ENCODE measurements at regions of chr19 and their contacts with region 1.

Region 1: DNA sequence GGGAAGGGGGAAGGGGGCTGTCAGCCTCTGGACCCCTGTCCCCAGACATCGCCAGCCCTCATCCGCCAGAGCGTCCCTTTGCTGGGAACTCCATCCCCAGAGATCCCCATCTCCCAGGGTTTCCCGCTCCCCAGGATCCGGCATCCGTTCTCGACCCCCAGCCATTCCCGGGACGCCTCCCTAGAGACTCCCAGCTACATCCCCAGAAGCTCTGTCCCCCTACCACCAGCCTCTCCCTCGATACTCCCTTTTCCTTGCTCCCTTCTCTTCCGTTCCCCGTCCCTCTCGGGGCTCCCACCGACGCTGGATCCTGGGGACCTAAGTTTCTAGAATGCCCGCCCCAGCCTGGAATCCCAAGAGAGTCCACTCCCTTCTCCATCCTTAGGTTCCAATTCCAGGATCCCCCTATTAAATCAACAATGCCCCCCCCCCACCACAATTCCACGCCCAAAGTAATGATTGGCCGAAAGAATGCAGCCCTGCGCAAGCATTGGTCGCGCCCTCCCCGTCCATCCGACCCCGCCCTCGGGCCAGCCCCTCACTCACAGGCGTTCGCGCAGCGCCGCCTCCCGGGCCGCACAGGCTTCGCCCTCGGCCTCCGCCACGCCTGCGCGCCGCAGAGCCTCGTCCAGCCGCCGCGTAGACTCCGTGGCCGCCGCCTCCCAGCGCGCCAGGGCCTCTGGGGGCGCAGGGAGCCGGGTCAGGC is 3.2 kb downstream of the CCDC194 start:
- DNase-seq: peak; percentile 95
- H3K4me3 ChIP-seq: peak overlapping the region; percentile 21 to 53 (median 41)
- H3K27ac ChIP-seq: no peak overlapping the region
- H3K4me1 ChIP-seq: peaks cover 17% of the 10 kb centered on the region
- H3K27me3 ChIP-seq: peaks cover 6% of the 10 kb centered on the region in 2 experiments
- CTCF ChIP-seq: peak; percentile 78 to 79
- POLR2A ChIP-seq: peak; percentile 31

Region 2: GRCh38 chr19:17292286-17293097 is 98.3 kb before region 1 on chr19:
- CTCF ChIA-PET with region 1: interaction called, 22 read pairs
- POLR2A ChIA-PET with region 1: no interaction called
- dilution Hi-C with region 1: no loop called
- intact Hi-C with region 1: loop called (anchors 1 kb)
- DNase-seq: peak; percentile 85
- H3K4me3 ChIP-seq: peak overlapping the region; percentile 36 to 51 (median 40)
- H3K27ac ChIP-seq: no peak overlapping the region
- H3K4me1 ChIP-seq: peaks cover 12% of the 10 kb centered on the region
- H3K27me3 ChIP-seq: no peaks in the 10 kb centered on the region
- CTCF ChIP-seq: peak; percentile 67
- POLR2A ChIP-seq: peak; percentile 82

Region 3: DNA sequence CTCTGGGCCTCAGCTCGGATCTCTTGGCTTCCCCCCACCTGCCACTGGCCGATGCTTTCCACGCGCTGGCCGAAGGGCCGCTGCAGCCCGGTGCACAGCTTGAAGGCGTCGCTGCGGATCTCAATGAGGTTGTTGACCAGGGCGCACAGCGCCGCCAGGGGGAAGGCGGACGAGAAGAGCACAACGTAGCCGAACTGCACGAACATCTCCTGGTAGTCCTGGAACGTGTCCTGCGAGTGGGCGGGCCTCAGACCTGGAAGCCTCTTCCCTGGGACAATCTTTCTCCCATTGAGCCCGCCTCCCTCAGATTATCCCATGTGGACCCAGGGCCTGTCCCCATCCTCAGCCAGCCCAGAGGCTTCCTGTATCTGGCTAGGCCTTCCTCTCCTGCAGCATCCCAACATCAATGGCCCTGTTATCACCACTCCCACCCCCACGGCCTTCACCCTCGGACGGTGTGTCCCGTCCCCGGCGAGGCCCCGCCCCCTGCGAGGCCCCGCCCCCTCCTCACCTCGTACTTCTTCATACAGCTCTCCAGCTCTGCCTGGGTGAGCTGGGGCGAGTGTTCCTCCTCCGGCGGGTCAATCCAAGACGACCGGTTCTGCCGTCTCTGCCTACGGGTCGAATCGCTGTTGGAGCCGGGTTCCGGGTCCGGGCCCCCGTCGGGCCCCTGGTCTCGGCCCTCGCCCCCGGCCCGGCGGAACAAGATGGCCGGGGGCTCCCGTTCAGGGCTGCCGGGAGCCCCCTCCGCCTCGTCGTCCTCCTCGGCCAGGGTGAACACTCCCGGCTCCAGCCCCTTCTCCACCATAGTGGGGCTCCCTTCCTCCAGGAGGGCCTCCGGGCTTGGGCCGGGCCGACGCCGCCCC is 62.9 kb before region 1 on chr19:
- CTCF ChIA-PET with region 1: interaction called, 16 read pairs
- POLR2A ChIA-PET with region 1: no interaction called
- dilution Hi-C with region 1: no loop called
- intact Hi-C with region 1: no loop called
- DNase-seq: peak; percentile 52
- H3K4me3 ChIP-seq: peak overlapping the region; percentile 15 to 24 (median 18)
- H3K27ac ChIP-seq: no peak overlapping the region
- H3K4me1 ChIP-seq: peaks cover 10% of the 10 kb centered on the region
- H3K27me3 ChIP-seq: peaks cover 4 to 19% of the 10 kb centered on the region in 2 experiments
- CTCF ChIP-seq: peak; percentile 48 to 61
- POLR2A ChIP-seq: no peak

Region 4: DNA sequence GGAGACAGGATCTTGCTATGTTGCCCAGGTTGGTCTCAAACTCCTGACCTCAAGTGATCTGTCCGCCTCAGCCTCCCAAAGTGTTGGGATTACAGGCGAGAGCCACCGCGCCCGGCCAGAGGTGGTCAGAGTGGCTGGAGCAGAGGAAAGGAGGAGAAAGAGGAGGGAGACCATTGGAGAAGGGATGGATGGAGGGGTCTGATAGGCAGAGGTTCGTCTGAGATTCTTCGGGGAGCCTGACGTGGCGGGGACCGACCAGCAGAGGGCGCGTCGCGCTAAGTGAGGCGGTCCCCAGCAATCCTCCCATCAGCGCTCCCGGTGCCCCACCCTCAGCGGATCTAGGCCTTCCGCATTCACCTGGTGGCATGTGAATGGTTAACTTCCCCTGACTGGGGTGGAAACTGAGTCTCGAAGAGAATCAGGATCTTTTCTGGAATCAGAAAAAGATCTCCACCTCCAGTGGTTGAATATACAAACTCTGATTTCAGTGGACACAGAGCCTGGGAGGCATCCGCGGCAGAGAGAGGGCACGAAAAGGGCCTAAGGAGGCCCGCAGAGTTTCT is 44.6 kb before region 1 on chr19:
- CTCF ChIA-PET with region 1: interaction called, 180 read pairs
- POLR2A ChIA-PET with region 1: interaction called, 7 read pairs
- dilution Hi-C with region 1: no loop called
- intact Hi-C with region 1: loop called (anchors 1 kb)
- DNase-seq: peak; percentile 62
- H3K4me3 ChIP-seq: no peak overlapping the region
- H3K27ac ChIP-seq: no peak overlapping the region
- H3K4me1 ChIP-seq: peaks cover 25% of the 10 kb centered on the region
- H3K27me3 ChIP-seq: no peaks in the 10 kb centered on the region
- CTCF ChIP-seq: peak; percentile 86 to 96
- POLR2A ChIP-seq: no peak

Region 5: DNA sequence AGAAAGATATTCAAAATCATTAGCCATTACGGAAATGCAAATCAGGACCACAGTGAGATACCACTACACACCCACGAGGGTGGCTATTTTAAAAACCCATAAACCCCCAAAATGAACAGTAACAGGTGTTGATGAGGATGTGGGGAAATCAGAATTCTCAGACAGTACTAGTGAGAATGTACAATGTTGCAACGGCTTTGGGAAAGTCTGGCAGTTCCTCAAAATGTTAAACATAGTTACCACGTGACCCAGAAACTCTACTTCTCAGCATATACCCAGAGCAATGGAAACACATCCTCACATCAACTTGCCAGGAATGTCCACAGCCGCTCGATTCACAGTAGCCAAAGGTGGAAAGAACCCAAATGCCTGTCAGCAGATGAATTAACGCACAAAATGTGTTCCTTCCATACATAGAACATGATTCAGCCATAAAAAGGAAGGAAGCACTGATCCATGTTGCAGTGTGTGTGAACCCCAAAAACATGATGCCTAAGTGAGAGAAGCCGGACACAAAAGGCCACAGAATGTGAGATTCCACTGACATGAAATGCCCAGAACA is 20.7 kb before region 1 on chr19:
- CTCF ChIA-PET with region 1: interaction called, 11 read pairs
- POLR2A ChIA-PET with region 1: no interaction called
- dilution Hi-C with region 1: no loop called
- intact Hi-C with region 1: no loop called
- DNase-seq: no peak
- H3K4me3 ChIP-seq: no peak overlapping the region
- H3K27ac ChIP-seq: no peak overlapping the region
- H3K4me1 ChIP-seq: peaks cover 3% of the 10 kb centered on the region
- H3K27me3 ChIP-seq: no peaks in the 10 kb centered on the region
- CTCF ChIP-seq: no peak
- POLR2A ChIP-seq: no peak

Region 6: GRCh38 chr19:17419621-17420466 is 29.0 kb after region 1 on chr19 and contains the start of gene MVB12A:
- CTCF ChIA-PET with region 1: interaction called, 12 read pairs
- POLR2A ChIA-PET with region 1: interaction called, 3 read pairs
- dilution Hi-C with region 1: no loop called
- intact Hi-C with region 1: loop called (anchors 1 kb)
- DNase-seq: peak; percentile 99
- H3K4me3 ChIP-seq: peak within 1 kb of the TSS; percentile 66 to 79 (median 68)
- H3K27ac ChIP-seq: peak within 1 kb of the TSS; percentile 64
- H3K4me1 ChIP-seq: peaks cover 14% of the 10 kb centered on the region
- H3K27me3 ChIP-seq: no peaks in the 10 kb centered on the region
- CTCF ChIP-seq: no peak
- POLR2A ChIP-seq: peak; percentile 60
- total RNA-seq, gene MVB12A: 58.1 and 63.3 TPM in 2 replicates

Region 7: GRCh38 chr19:17496337-17496997 is 105.6 kb after region 1 on chr19:
- CTCF ChIA-PET with region 1: no interaction called
- POLR2A ChIA-PET with region 1: no interaction called
- dilution Hi-C with region 1: no loop called
- intact Hi-C with region 1: no loop called
- DNase-seq: peak; percentile 81
- H3K4me3 ChIP-seq: no peak overlapping the region
- H3K27ac ChIP-seq: no peak overlapping the region
- H3K4me1 ChIP-seq: peaks cover 12% of the 10 kb centered on the region
- H3K27me3 ChIP-seq: no peaks in the 10 kb centered on the region
- CTCF ChIP-seq: peak; percentile 99
- POLR2A ChIP-seq: no peak